GM12878 (cell line): ENCODE measurements at regions of chr10 and their contacts with region 1.

Region 1: GRCh38 chr10:22606164-22606614 is 108.2 kb downstream of the PIP4K2A start:
- DNase-seq: peak; percentile 93
- ATAC-seq: peak; percentile 88
- H3K4me3 ChIP-seq: peak overlapping the region; percentile 33
- H3K27ac ChIP-seq: peak overlapping the region; percentile 81
- H3K4me1 ChIP-seq: peaks cover 70% of the 10 kb centered on the region
- H3K27me3 ChIP-seq: no peaks in the 10 kb centered on the region
- CTCF ChIP-seq: no peak
- EP300 ChIP-seq: peak; percentile 79 to 89
- POLR2A ChIP-seq: peak; percentile 65
- RAD21 ChIP-seq: 0 out of 2 replicates have a peak, but pooled peaks have one; percentile 9

Region 2: DNA sequence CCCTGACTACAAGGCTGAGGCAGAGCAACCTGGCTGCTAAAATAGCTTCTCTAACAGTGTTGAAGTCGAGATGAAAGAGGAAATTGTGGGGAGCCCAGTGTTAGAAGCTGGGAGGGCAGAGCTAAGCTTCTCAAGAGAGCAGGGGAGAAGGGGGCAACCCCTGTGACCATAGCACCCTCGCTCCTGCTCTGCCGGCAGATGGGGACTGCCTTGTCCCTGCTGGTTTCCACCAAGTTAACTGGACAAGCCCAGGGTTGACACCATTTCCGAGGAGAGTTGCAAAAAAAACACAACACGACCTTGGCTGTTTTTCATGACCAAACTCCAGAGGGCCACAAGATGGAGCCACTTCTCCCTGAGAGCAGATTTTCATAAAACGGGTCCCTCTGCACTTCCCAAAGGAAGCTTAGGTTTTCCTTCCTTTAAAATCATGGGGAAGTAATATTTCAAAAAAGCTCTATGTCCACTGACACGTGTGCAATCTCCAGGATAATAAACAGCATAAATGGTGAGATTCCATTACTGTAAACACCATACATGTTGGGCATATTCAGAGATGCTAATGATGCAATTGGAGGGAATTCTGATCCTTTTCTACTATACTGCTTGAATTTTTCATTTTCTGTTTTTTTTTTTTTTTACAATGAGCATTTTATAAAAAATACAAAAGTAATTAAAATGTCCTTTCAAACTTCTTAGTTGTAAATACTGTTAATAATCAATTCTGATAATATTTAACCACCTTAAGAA is 32.2 kb before region 1 on chr10:
- CTCF ChIA-PET with region 1: interaction called, 11 read pairs
- POLR2A ChIA-PET with region 1: interaction called, 3 read pairs
- RAD21 ChIA-PET with region 1: interaction called, 12 read pairs
- SMC1A ChIA-PET with region 1: interaction called, 4 read pairs
- in situ Hi-C with region 1: no loop called
- intact Hi-C with region 1: no loop called
- DNase-seq: no peak
- ATAC-seq: peak; percentile 76
- H3K4me3 ChIP-seq: no peak overlapping the region
- H3K27ac ChIP-seq: 0 out of 2 replicates have a peak overlapping the region, but pooled peaks have one; percentile 49
- H3K4me1 ChIP-seq: 0 out of 2 replicates have a peak, but pooled peaks cover 2% of the 10 kb centered on the region
- H3K27me3 ChIP-seq: no peaks in the 10 kb centered on the region
- CTCF ChIP-seq: peak; percentile 57 to 66 (median 63)
- EP300 ChIP-seq: no peak
- POLR2A ChIP-seq: no peak
- RAD21 ChIP-seq: peak; percentile 84

Region 3: DNA sequence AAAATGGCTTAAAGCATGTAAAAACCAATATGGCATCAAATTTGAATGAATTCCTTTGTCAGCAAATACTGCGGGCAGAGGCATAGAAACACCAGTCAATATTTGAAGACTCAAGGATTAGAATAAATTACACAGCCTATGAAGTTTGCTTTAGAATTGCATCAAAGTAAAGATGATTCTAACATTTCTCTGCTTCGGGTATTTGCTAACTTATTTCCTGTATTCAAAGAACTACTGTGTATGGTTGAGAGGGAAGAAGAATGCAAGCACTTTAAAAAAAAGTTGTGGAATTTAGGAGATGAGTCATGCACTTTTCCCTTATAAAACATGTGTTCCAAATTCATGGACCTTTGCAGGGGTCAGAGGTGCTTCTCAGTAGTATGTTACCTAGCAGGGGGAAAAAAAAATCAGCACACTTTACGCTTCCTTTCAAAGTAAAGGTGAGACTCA is 18.1 kb after region 1 on chr10:
- CTCF ChIA-PET with region 1: interaction called, 17 read pairs
- POLR2A ChIA-PET with region 1: interaction called, 82 read pairs
- RAD21 ChIA-PET with region 1: interaction called, 43 read pairs
- SMC1A ChIA-PET with region 1: interaction called, 139 read pairs
- in situ Hi-C with region 1: no loop called
- intact Hi-C with region 1: no loop called
- DNase-seq: no peak
- ATAC-seq: no peak
- H3K4me3 ChIP-seq: no peak overlapping the region
- H3K27ac ChIP-seq: no peak overlapping the region
- H3K4me1 ChIP-seq: peaks cover 34% of the 10 kb centered on the region
- H3K27me3 ChIP-seq: no peaks in the 10 kb centered on the region
- CTCF ChIP-seq: no peak
- EP300 ChIP-seq: no peak
- POLR2A ChIP-seq: no peak
- RAD21 ChIP-seq: no peak

Region 4: GRCh38 chr10:22630234-22631174 is 24.3 kb after region 1 on chr10:
- CTCF ChIA-PET with region 1: interaction called, 17 read pairs
- POLR2A ChIA-PET with region 1: interaction called, 82 read pairs
- RAD21 ChIA-PET with region 1: interaction called, 43 read pairs
- SMC1A ChIA-PET with region 1: interaction called, 139 read pairs
- in situ Hi-C with region 1: no loop called
- intact Hi-C with region 1: loop called (anchors 1 kb)
- DNase-seq: peak; percentile 92
- ATAC-seq: peak; percentile 89
- H3K4me3 ChIP-seq: peak overlapping the region; percentile 57
- H3K27ac ChIP-seq: peak overlapping the region; percentile 89
- H3K4me1 ChIP-seq: peaks cover 42% of the 10 kb centered on the region
- H3K27me3 ChIP-seq: no peaks in the 10 kb centered on the region
- CTCF ChIP-seq: no peak
- EP300 ChIP-seq: peak; percentile 70; a peak in 3 of 4 replicates
- POLR2A ChIP-seq: no peak
- RAD21 ChIP-seq: 0 out of 2 replicates have a peak, but pooled peaks have one; percentile 13

Region 5: DNA sequence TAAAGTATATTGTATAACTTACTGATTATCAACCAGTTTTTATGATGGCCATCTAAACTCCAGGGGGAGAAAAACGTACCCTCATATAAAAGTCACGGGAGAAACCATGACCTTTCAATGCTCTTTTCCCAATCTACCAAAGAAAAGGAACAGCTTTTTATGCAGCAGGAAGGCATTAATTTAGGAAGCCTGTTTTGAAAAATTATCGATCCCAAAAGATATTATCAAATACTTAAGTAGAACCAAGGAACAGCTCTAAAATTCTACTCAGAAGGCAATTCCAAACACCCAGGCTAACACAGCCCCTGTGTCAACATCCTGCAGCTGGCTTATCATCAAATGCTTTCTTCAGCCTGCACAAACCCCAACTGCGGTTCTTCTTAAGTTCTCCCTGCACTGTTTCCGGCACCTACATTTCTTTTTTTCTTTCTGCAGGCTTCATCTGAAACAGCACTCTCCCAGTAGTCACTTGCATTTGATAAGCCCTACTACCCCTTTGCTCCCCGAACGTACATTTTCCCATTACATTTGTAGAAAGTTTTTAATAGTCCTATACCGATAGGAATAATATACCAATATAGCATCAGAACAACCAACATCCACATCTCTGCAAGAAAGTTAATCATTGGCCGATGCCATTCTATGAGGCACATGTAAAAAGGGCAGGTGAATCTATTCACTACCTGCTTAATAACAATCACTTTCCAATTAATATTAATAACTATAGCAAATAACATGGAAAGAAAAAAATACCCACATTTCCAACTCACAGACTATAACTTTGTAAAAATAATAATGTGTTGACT is 60.3 kb after region 1 on chr10:
- CTCF ChIA-PET with region 1: interaction called, 3 read pairs
- POLR2A ChIA-PET with region 1: no interaction called
- RAD21 ChIA-PET with region 1: interaction called, 8 read pairs
- SMC1A ChIA-PET with region 1: interaction called, 13 read pairs
- in situ Hi-C with region 1: no loop called
- intact Hi-C with region 1: no loop called
- DNase-seq: no peak
- ATAC-seq: peak; percentile 77
- H3K4me3 ChIP-seq: peak overlapping the region; percentile 39; the same call in 1 of the 2 replicates
- H3K27ac ChIP-seq: peak overlapping the region; percentile 50
- H3K4me1 ChIP-seq: peaks cover 27% of the 10 kb centered on the region
- H3K27me3 ChIP-seq: no peaks in the 10 kb centered on the region
- CTCF ChIP-seq: no peak
- EP300 ChIP-seq: no peak
- POLR2A ChIP-seq: no peak
- RAD21 ChIP-seq: no peak

Region 6: GRCh38 chr10:22682237-22683139 is 76.3 kb after region 1 on chr10:
- CTCF ChIA-PET with region 1: interaction called, 3 read pairs
- POLR2A ChIA-PET with region 1: interaction called, 5 read pairs
- RAD21 ChIA-PET with region 1: interaction called, 13 read pairs
- SMC1A ChIA-PET with region 1: interaction called, 24 read pairs
- in situ Hi-C with region 1: no loop called
- intact Hi-C with region 1: no loop called
- DNase-seq: peak; percentile 52
- ATAC-seq: peak; percentile 64
- H3K4me3 ChIP-seq: peak overlapping the region; percentile 45; the same call in 1 of the 2 replicates
- H3K27ac ChIP-seq: peak overlapping the region; percentile 82
- H3K4me1 ChIP-seq: peaks cover 43% of the 10 kb centered on the region
- H3K27me3 ChIP-seq: no peaks in the 10 kb centered on the region
- CTCF ChIP-seq: no peak
- EP300 ChIP-seq: no peak
- POLR2A ChIP-seq: no peak
- RAD21 ChIP-seq: no peak

Region 7: GRCh38 chr10:22704471-22704911 is 98.3 kb after region 1 on chr10:
- CTCF ChIA-PET with region 1: interaction called, 6 read pairs
- POLR2A ChIA-PET with region 1: interaction called, 5 read pairs
- RAD21 ChIA-PET with region 1: interaction called, 19 read pairs
- SMC1A ChIA-PET with region 1: interaction called, 18 read pairs
- in situ Hi-C with region 1: no loop called
- intact Hi-C with region 1: no loop called
- DNase-seq: no peak
- ATAC-seq: peak; percentile 53
- H3K4me3 ChIP-seq: peak overlapping the region; percentile 66; the same call in 1 of the 2 replicates
- H3K27ac ChIP-seq: peak overlapping the region; percentile 76
- H3K4me1 ChIP-seq: peaks cover 65% of the 10 kb centered on the region
- H3K27me3 ChIP-seq: no peaks in the 10 kb centered on the region
- CTCF ChIP-seq: no peak
- EP300 ChIP-seq: no peak
- POLR2A ChIP-seq: no peak
- RAD21 ChIP-seq: 0 out of 2 replicates have a peak, but pooled peaks have one; percentile 9